Sigmoid colon (tissue), 7 donors: ENCODE measurements at regions of chr20 and their contacts with region 1.

Region 1: DNA sequence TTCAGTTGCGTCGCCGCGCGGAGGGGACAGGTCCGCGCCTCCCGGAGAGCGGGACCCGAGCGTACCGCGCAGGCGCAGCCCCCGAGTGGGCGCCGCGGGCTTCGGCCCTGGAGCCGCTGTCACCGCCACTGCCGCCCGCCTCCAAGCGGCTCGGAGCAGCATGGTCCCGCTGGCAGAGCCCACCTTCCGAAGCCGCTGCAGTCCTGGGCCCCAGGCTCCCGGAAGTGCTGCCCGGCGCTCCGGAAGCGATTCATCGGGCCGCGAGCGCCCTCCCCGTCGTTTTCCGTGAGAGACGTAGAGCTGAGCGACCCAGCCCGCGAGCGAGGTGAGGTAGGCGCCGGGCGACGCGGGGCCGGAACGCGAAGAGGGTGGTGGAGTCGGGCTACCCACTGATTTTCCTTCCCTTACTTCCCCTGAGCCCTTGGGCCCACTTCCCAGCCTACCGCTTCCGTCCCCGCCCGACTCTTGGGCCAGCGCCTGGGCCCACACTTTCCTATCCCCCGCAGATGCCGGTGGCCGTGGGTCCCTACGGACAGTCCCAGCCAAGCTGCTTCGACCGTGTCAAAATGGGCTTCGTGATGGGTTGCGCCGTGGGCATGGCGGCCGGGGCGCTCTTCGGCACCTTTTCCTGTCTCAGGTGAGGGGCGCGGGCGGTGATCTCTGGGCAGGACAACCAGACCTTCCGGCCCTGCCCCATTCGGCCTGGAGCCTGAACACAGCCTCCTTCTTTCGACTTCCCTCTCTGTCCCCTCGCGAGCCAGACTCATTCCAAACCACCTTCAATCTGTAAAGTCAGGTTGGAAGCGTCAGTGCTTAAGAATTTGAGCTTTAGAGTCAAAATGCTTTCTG is at the starts of genes NFS1 and ROMO1:
- DNase-seq: peak; percentile 92
- H3K4me3 ChIP-seq: peak within 1 kb of the TSS; percentile 78 to 93 (median 90)
- H3K27ac ChIP-seq: peak within 1 kb of the TSS; percentile 87 to 92 (median 90)
- H3K4me1 ChIP-seq: peaks cover 0 to 28% (median 24%) of the 10 kb centered on the region in 4 donors
- H3K27me3 ChIP-seq: no peaks in the 10 kb centered on the region
- CTCF ChIP-seq: peak in 1 of 4 experiments; percentile 20
- EP300 ChIP-seq: no peak
- POLR2A ChIP-seq: peak; percentile 46 to 61
- total RNA-seq, gene NFS1: 25.2 to 39.2 (median 32.3) TPM
- total RNA-seq, gene ROMO1: 206 to 512 (median 398) TPM

Region 2: GRCh38 chr20:35463455-35464300 is 235.7 kb before region 1 on chr20:
- intact Hi-C with region 1: loop called (anchors 10 kb)
- DNase-seq: no peak
- H3K4me3 ChIP-seq: no peak overlapping the region
- H3K27ac ChIP-seq: no peak overlapping the region
- H3K4me1 ChIP-seq: peaks cover 0 to 5% (median 0%) of the 10 kb centered on the region in 4 donors
- H3K27me3 ChIP-seq: no peaks in the 10 kb centered on the region
- CTCF ChIP-seq: peak; percentile 38 to 77 (median 72)
- EP300 ChIP-seq: no peak
- POLR2A ChIP-seq: no peak

Region 3: DNA sequence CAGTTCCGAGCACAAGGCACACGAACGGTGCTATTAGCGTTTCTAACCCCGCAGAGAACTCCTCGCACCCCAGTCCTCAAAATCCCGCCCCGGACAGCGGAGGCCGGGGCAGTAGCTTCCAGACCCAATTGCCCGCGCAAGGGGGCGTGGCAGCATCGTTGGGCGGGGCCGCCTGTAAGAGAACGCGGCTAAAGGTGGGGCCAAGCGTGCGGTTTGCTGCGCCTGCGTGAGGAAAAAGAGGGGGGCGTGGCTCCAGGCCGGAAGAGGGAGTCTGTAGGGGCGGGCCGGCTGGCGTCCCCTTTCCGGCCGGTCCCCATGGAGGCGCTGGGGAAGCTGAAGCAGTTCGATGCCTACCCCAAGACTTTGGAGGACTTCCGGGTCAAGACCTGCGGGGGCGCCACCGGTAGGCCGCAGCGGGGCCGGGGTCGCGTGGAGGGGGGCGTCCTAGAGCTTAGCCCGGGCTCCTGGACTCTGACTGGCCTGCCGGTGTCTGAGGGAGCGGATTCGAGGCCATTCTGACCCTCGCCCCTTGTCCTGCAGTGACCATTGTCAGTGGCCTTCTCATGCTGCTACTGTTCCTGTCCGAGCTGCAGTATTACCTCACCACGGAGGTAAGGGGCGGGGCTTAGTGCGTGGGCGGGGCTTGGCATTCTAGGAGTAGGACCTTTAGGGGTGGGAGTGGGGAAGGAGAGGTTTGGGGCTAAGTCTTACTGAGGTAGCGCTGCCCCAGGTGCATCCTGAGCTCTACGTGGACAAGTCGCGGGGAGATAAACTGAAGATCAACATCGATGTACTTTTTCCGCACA is 157.4 kb before region 1 on chr20 and contains the start of gene ERGIC3:
- intact Hi-C with region 1: loop called (anchors 5 kb)
- DNase-seq: peak; percentile 98
- H3K4me3 ChIP-seq: peak within 1 kb of the TSS; percentile 68 to 88 (median 80)
- H3K27ac ChIP-seq: peak within 1 kb of the TSS; percentile 67 to 77 (median 72)
- H3K4me1 ChIP-seq: peaks cover 0 to 15% (median 14%) of the 10 kb centered on the region in 4 donors
- H3K27me3 ChIP-seq: no peaks in the 10 kb centered on the region
- CTCF ChIP-seq: no peak
- EP300 ChIP-seq: no peak
- POLR2A ChIP-seq: peak in 1 of 2 donors; percentile 20
- total RNA-seq, gene ERGIC3: 141 to 230 (median 195) TPM

Region 4: DNA sequence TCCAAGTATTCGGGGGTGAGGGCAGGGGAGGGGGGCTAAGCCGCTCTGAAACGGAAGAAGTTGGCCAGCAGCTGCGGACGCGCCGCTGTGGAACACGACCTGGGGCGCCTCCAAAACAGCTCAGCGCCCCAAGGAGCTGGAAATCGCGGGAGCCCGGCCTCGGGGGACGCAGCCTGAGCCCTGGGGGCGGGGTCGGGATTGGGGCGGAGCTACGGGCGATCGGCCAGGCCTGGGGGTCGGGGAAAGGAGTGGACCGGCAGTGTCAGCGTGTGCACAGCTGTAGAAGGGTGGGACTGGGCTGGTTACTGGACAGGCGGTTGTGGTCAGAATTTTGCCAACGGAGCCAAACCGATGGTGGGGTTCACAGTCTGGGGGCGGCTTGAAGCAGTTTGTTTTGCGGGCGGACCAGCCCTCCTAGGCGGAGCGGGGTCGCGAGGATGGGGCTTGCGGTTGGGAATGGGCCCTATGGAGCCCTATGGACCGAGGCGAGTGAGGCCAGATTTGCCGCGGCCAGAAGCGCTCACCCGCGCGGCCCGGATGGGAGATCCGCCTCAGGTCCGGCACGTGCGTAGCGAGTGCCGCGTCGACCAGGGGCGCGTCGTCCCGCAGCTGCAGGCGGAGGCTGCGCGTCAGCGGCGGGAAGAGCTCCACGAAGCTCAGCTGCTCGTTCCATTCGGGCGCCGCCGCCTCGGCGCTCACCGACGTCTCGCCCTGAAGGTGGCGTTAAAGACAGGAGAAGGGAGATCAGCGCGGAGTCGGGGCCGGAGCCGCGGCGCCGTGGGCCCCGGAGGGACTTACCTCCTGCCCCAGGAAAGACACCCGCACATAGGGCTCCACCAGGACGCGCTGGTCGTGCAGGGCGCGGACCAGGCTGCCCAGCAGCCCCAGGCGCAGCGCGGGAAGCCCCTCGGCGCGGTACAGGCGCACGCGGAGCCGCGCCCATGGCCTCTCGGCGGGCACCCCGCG is 98.1 kb before region 1 on chr20:
- intact Hi-C with region 1: loop called (anchors 2 kb)
- DNase-seq: peak; percentile 91
- H3K4me3 ChIP-seq: peak overlapping the region; percentile 26 to 59 (median 50)
- H3K27ac ChIP-seq: peak overlapping the region in 2 of 4 donors; percentile 47 to 62
- H3K4me1 ChIP-seq: peaks cover 0 to 19% (median 19%) of the 10 kb centered on the region in 4 donors
- H3K27me3 ChIP-seq: peaks cover 0 to 29% (median 5%) of the 10 kb centered on the region in 3 donors
- CTCF ChIP-seq: peak; percentile 15 to 33 (median 26)
- EP300 ChIP-seq: no peak
- POLR2A ChIP-seq: no peak

Region 5: DNA sequence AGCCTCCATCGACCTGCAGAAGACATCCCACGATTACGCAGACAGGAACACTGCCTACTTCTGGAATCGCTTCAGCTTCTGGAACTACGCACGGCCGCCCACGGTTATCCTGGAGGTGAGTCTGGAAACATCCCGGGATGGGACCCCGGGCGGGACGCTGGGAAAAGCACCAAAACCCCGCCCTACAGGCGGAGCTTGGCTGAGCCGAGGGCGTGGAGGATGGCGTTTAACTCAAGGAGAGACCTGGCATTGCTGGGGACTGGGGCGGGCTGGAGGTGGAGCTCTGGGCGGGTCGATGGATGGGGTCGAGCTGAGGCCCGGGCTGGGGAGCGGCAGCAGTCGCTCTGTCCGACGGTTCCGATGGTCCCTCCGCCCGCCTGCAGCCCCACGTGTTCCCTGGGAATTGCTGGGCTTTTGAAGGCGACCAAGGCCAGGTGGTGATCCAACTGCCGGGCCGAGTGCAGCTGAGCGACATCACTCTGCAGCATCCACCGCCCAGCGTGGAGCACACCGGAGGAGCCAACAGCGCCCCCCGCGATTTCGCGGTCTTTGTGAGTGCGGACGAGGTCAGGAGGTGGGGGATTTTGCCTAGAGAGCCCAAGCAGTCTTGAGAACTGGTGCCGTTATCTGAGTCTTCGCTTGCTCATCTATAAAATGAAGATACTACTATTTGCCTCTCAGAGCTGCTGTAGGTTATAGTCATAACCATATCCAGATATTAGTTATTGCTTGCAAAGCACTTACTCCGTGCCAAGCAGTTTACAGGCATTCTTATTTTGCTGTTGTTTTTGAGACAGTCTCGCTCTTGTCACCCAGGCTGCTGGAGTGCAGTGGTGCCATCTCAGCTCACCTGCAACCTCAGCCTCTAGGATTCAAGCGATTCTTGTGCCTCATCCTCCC is 79.9 kb before region 1 on chr20:
- intact Hi-C with region 1: loop called (anchors 5 kb)
- DNase-seq: peak; percentile 92
- H3K4me3 ChIP-seq: peak overlapping the region; percentile 34 to 56 (median 43)
- H3K27ac ChIP-seq: peak overlapping the region; percentile 53 to 99 (median 88)
- H3K4me1 ChIP-seq: peaks cover 0 to 43% (median 33%) of the 10 kb centered on the region in 4 donors
- H3K27me3 ChIP-seq: no peaks in the 10 kb centered on the region
- CTCF ChIP-seq: peak in 2 of 4 experiments; percentile 6 to 10
- EP300 ChIP-seq: no peak
- POLR2A ChIP-seq: no peak

Region 6: GRCh38 chr20:35673884-35674283 is 25.5 kb before region 1 on chr20:
- intact Hi-C with region 1: no loop called
- DNase-seq: peak; percentile 44
- H3K4me3 ChIP-seq: no peak overlapping the region
- H3K27ac ChIP-seq: no peak overlapping the region
- H3K4me1 ChIP-seq: no peaks in the 10 kb centered on the region
- H3K27me3 ChIP-seq: no peaks in the 10 kb centered on the region
- CTCF ChIP-seq: no peak
- EP300 ChIP-seq: no peak
- POLR2A ChIP-seq: no peak

Region 7: GRCh38 chr20:35711588-35712209 is 12.3 kb after region 1 on chr20:
- intact Hi-C with region 1: no loop called
- DNase-seq: no peak
- H3K4me3 ChIP-seq: no peak overlapping the region
- H3K27ac ChIP-seq: no peak overlapping the region
- H3K4me1 ChIP-seq: peaks cover 0 to 42% (median 24%) of the 10 kb centered on the region in 4 donors
- H3K27me3 ChIP-seq: no peaks in the 10 kb centered on the region
- CTCF ChIP-seq: no peak
- EP300 ChIP-seq: no peak
- POLR2A ChIP-seq: no peak

Region 8: DNA sequence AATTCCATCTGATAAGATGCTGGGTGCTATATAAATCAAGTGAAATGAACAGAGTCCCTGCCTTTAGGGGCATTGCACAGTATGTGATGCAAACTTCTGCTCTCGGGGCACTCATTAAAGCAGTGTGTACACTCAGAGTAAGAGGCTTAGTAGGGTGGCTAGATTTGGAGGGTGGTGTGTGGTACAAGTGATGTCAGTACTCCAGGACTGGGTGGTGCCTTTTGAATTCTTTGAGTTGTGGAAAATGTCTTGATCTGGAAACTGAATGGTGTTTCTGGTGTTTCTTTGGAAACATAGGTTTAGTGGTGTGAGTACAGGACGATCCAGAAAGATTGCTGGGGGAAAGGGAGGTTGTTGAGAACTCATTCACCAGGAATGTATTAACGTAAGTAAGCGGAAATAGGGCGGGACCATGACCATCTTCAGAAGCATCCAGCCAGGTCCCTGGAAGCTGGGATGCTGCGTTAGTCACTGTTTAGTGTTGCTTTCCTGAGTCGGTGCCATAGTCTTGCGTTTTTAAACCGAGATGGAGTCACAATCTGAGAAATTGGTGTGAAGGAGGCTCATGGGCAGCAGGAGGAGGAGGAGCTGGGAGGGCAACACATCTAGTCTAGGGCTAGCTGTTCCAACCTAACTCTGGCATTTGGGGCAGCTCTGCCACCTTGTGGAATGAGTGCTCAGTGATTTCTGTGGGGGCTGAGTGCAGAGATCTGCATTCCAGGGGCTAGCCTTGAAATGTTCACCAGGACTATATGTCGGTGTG is 184.6 kb after region 1 on chr20:
- intact Hi-C with region 1: loop called (anchors 10 kb)
- DNase-seq: peak; percentile 89
- H3K4me3 ChIP-seq: peak overlapping the region in 3 of 4 donors; percentile 18 to 33 (median 20)
- H3K27ac ChIP-seq: peak overlapping the region; percentile 70 to 88 (median 78)
- H3K4me1 ChIP-seq: peaks cover 0 to 27% (median 15%) of the 10 kb centered on the region in 4 donors
- H3K27me3 ChIP-seq: no peaks in the 10 kb centered on the region
- CTCF ChIP-seq: peak; percentile 66 to 75 (median 72)
- EP300 ChIP-seq: peak in 3 of 4 donors; percentile 50 to 88 (median 53)
- POLR2A ChIP-seq: no peak